ENCODE measurements at regions of chr9 and their contacts with region 1.

Region 1: GRCh38 chr9:8486095-8486494 is 686.5 kb upstream of the DMAC1 start:
- DNase-seq: peak in 4 of 5 donors; percentile 25 to 60 (median 30)
- ATAC-seq: peak in 3 of 4 donors; percentile 86 to 88 (median 87)
- H3K4me3 ChIP-seq: no peak overlapping the region
- H3K27ac ChIP-seq: no peak overlapping the region
- H3K4me1 ChIP-seq: no peaks in the 10 kb centered on the region
- H3K27me3 ChIP-seq: no peaks in the 10 kb centered on the region
- CTCF ChIP-seq: peak in 11 of 12 donors; percentile 22 to 62 (median 46)
- POLR2A ChIP-seq: no peak

Region 2: GRCh38 chr9:7570107-7570720 is 915.9 kb before region 1 on chr9:
- intact Hi-C with region 1: loop called in 1 of 10 experiments (anchors 10 kb)
- DNase-seq: peak in 3 of 5 donors; percentile 28 to 40 (median 29)
- ATAC-seq: no peak
- H3K4me3 ChIP-seq: no peak overlapping the region
- H3K27ac ChIP-seq: no peak overlapping the region
- H3K4me1 ChIP-seq: no peaks in the 10 kb centered on the region
- H3K27me3 ChIP-seq: no peaks in the 10 kb centered on the region
- CTCF ChIP-seq: peak; percentile 64 to 83 (median 74)
- POLR2A ChIP-seq: no peak

Region 3: GRCh38 chr9:8419596-8420275 is 66.4 kb before region 1 on chr9:
- intact Hi-C with region 1: loop called in 1 of 10 experiments (anchors 10 kb)
- DNase-seq: no peak
- ATAC-seq: no peak
- H3K4me3 ChIP-seq: no peak overlapping the region
- H3K27ac ChIP-seq: no peak overlapping the region
- H3K4me1 ChIP-seq: no peaks in the 10 kb centered on the region
- H3K27me3 ChIP-seq: no peaks in the 10 kb centered on the region
- CTCF ChIP-seq: no peak
- POLR2A ChIP-seq: no peak

Region 4: GRCh38 chr9:8857926-8858595 is 372.0 kb after region 1 on chr9:
- intact Hi-C with region 1: loop called in 4 of 10 experiments (anchors 10 kb)
- DNase-seq: peak; percentile 59 to 83 (median 73)
- ATAC-seq: peak; percentile 30 to 86 (median 83)
- H3K4me3 ChIP-seq: peak overlapping the region; percentile 59 to 89 (median 66)
- H3K27ac ChIP-seq: peak overlapping the region in 6 of 12 donors; percentile 44 to 63 (median 54)
- H3K4me1 ChIP-seq: peaks cover 0 to 19% (median 3%) of the 10 kb centered on the region in 12 donors
- H3K27me3 ChIP-seq: peaks cover 0 to 40% (median 0%) of the 10 kb centered on the region in 9 donors
- CTCF ChIP-seq: no peak
- POLR2A ChIP-seq: no peak

Region 5: GRCh38 chr9:8880060-8880459 is 394.0 kb after region 1 on chr9:
- intact Hi-C with region 1: loop called in 1 of 10 experiments (anchors 10 kb)
- DNase-seq: no peak
- ATAC-seq: no peak
- H3K4me3 ChIP-seq: no peak overlapping the region
- H3K27ac ChIP-seq: no peak overlapping the region
- H3K4me1 ChIP-seq: no peaks in the 10 kb centered on the region
- H3K27me3 ChIP-seq: no peaks in the 10 kb centered on the region
- CTCF ChIP-seq: no peak
- POLR2A ChIP-seq: no peak

Region 6: DNA sequence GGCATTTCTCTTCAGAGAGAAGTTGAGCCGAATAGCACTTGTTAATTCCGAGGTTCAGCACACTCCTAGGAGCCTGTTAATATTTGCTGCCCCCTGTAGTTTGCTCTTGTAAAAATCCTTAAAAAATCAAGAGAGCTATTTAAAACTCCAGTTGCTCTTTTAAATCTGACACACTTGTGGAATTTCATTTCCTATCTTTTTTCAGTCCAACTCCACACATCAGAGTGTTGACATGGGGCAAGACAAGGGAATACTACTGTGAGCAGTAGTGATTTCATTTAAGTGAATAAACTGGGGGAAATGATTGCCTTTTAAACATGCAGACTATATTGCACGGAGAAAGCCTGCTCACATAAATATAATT is 409.7 kb after region 1 on chr9:
- intact Hi-C with region 1: loop called in 7 of 10 experiments (anchors 1 to 10 kb)
- DNase-seq: no peak
- ATAC-seq: peak; percentile 37 to 86 (median 72)
- H3K4me3 ChIP-seq: peak overlapping the region in 3 of 12 donors; percentile 4 to 38 (median 23)
- H3K27ac ChIP-seq: no peak overlapping the region
- H3K4me1 ChIP-seq: peaks cover 0 to 10% (median 0%) of the 10 kb centered on the region in 12 donors
- H3K27me3 ChIP-seq: no peaks in the 10 kb centered on the region
- CTCF ChIP-seq: peak; percentile 37 to 72 (median 60)
- POLR2A ChIP-seq: no peak

Region 7: DNA sequence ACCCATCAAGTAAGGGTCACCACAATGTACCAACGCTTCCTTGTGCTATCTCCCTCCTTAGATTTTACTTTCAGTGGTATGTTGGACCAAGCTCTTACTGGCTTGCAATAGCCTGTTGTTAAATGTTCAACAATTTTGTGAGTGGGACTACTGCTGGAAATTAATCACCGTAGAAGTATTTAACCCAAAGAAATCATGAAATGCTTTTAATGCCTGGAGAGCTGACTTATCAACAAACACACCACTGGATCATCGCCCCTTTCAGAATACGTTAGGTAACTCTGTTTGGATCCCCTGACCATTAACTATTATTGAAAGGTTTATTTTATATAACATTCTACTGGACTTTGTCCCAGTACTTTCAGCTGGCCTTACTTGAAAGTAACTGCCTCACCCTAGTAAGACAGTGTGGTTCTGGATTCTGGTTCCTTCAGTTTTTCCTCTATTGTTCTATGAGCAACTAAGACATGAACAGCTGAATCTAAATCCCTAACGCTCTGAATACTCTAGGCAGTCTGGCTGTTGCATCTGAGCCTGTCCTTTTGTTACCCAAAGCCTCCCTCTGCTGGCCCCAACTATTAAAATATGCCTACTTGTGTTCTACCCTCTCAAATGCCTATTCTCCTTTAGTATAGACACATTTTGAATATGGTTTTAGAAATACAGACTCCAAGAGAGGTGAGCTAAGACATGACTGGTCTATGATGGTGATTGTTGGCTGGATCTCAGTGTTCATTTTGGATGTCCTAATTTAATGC is 516.9 kb after region 1 on chr9:
- intact Hi-C with region 1: loop called in 5 of 10 experiments (anchors 2 to 10 kb)
- DNase-seq: peak in 4 of 5 donors; percentile 6 to 43 (median 24)
- ATAC-seq: peak; percentile 78 to 95 (median 83)
- H3K4me3 ChIP-seq: no peak overlapping the region
- H3K27ac ChIP-seq: no peak overlapping the region
- H3K4me1 ChIP-seq: peaks cover 0 to 4% (median 0%) of the 10 kb centered on the region in 12 donors
- H3K27me3 ChIP-seq: no peaks in the 10 kb centered on the region
- CTCF ChIP-seq: peak in 9 of 12 donors; percentile 25 to 53 (median 35)
- POLR2A ChIP-seq: no peak

Measured in heart left ventricle (tissue), 16 donors.